ENCODE measurements at regions of chr9 and their contacts with region 1.

Region 1: GRCh38 chr9:88011005-88011766 is 36.9 kb upstream of the CDK20 start:
- DNase-seq: no peak
- H3K4me3 ChIP-seq: no peak overlapping the region
- H3K27ac ChIP-seq: no peak overlapping the region
- H3K4me1 ChIP-seq: no peaks in the 10 kb centered on the region
- H3K27me3 ChIP-seq: no peaks in the 10 kb centered on the region
- CTCF ChIP-seq: no peak
- POLR2A ChIP-seq: no peak

Region 2: GRCh38 chr9:87950765-87951488 is 60.3 kb before region 1 on chr9:
- intact Hi-C with region 1: no loop called
- DNase-seq: no peak
- H3K4me3 ChIP-seq: no peak overlapping the region
- H3K27ac ChIP-seq: no peak overlapping the region
- H3K4me1 ChIP-seq: no peaks in the 10 kb centered on the region
- H3K27me3 ChIP-seq: no peaks in the 10 kb centered on the region
- CTCF ChIP-seq: peak in 2 of 4 experiments; percentile 34 to 36
- POLR2A ChIP-seq: no peak

Region 3: GRCh38 chr9:88060736-88061135 is 49.5 kb after region 1 on chr9:
- intact Hi-C with region 1: loop called (anchors 10 kb)
- DNase-seq: no peak
- H3K4me3 ChIP-seq: no peak overlapping the region
- H3K27ac ChIP-seq: no peak overlapping the region
- H3K4me1 ChIP-seq: no peaks in the 10 kb centered on the region
- H3K27me3 ChIP-seq: no peaks in the 10 kb centered on the region
- CTCF ChIP-seq: no peak
- POLR2A ChIP-seq: no peak